ENCODE measurements at regions of chrX and their contacts with region 1.

Region 1: GRCh38 chrX:107654872-107655761 is 26.8 kb downstream of the PRPS1 start:
- DNase-seq: peak; percentile 85
- ATAC-seq: peak; percentile 95
- H3K4me3 Mint-ChIP-seq: peak overlapping the region; percentile 29; the same call in 1 of the 2 replicates
- H3K27ac Mint-ChIP-seq: peak overlapping the region; percentile 57
- H3K4me1 Mint-ChIP-seq: peaks cover 20% of the 10 kb centered on the region
- H3K27me3 Mint-ChIP-seq: no peaks in the 10 kb centered on the region
- CTCF ChIP-seq: peak; percentile 72

Region 2: GRCh38 chrX:107542500-107542899 is 112.6 kb before region 1 on chrX:
- CTCF ChIA-PET with region 1: interaction called, 10 read pairs
- POLR2A ChIA-PET with region 1: no interaction called
- DNase-seq: peak; percentile 14
- ATAC-seq: peak; percentile 92
- H3K4me3 Mint-ChIP-seq: no peak overlapping the region
- H3K27ac Mint-ChIP-seq: no peak overlapping the region
- H3K4me1 Mint-ChIP-seq: peaks cover 13% of the 10 kb centered on the region
- H3K27me3 Mint-ChIP-seq: no peaks in the 10 kb centered on the region
- CTCF ChIP-seq: no peak

Region 3: DNA sequence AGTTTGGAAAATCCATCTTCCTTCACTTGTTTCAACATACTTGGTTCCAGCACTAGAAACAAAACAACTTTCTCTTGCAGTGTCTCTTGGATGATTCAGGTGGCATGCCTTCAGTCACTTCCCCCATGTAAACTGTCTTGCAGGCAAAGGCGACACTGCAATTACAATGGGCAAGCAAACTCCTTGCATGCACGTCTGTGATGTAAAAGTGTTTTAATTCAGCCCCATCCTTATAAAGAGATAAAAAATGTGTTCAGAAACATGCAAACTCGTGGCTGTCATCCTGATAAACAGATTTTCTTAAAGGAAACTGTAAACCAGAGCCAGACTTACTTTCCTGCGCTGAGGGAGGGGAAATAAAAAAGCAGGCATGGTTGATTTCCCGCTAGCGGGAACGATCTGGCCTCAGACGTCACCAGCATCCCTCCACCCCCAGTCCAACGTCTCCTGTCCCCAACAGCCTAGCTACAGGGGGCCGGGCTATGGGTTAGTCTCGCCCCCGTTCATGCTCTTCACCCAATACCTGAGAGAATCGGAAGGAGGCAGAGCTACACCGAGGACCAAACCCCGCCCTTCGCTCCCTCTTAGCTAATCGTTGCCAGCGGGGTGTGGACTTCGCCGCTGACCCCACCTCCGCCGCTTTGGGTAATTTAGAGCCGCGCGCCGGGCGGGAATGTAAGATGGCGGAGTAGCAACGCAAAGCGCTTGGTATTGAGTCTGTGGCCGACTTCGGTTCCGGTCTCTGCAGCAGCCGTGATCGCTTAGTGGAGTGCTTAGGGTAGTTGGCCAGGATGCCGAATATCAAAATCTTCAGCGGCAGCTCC is 27.1 kb before region 1 on chrX and contains the start of gene PRPS1:
- CTCF ChIA-PET with region 1: interaction called, 16 read pairs
- POLR2A ChIA-PET with region 1: interaction called, 9 read pairs
- DNase-seq: peak; percentile 90
- ATAC-seq: peak; percentile 98
- H3K4me3 Mint-ChIP-seq: peak within 1 kb of the TSS; percentile 92
- H3K27ac Mint-ChIP-seq: peak within 1 kb of the TSS; percentile 79
- H3K4me1 Mint-ChIP-seq: peaks cover 24% of the 10 kb centered on the region
- H3K27me3 Mint-ChIP-seq: no peaks in the 10 kb centered on the region; the same call in 1 of the 2 replicates
- CTCF ChIP-seq: no peak
- total RNA-seq, gene PRPS1: 106 to 126 TPM (median 107 TPM) in 3 replicates

Region 4: DNA sequence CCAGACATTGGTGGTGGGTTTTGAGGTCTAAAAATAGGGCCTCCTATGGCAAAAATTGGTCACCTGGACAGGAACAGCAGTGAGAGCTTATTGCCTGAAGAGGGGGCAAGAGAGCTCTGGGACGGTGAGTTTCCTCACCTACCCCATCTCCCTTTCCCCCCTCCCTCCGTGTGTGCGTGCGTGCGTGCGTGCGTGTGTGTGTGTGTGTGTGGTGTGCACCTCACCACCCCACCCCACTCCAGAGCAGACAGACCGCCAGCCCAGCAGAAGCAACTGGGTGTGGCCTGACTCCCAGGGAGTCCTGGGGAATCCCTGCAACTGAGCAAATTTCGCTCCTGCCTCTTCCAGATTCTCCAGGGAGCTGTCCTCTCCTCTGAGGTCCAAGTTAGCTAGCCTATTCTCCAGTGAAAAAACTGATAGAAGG is 17.9 kb after region 1 on chrX:
- CTCF ChIA-PET with region 1: interaction called, 13 read pairs
- POLR2A ChIA-PET with region 1: interaction called, 5 read pairs
- DNase-seq: peak; percentile 54
- ATAC-seq: peak; percentile 65
- H3K4me3 Mint-ChIP-seq: 0 out of 2 replicates have a peak overlapping the region, but pooled peaks have one; percentile 24
- H3K27ac Mint-ChIP-seq: no peak overlapping the region
- H3K4me1 Mint-ChIP-seq: peaks cover 33% of the 10 kb centered on the region
- H3K27me3 Mint-ChIP-seq: 0 out of 2 replicates have a peak, but pooled peaks cover under 1% of the 10 kb centered on the region
- CTCF ChIP-seq: peak; percentile 43; the same call in 1 of the 2 replicates

Region 5: DNA sequence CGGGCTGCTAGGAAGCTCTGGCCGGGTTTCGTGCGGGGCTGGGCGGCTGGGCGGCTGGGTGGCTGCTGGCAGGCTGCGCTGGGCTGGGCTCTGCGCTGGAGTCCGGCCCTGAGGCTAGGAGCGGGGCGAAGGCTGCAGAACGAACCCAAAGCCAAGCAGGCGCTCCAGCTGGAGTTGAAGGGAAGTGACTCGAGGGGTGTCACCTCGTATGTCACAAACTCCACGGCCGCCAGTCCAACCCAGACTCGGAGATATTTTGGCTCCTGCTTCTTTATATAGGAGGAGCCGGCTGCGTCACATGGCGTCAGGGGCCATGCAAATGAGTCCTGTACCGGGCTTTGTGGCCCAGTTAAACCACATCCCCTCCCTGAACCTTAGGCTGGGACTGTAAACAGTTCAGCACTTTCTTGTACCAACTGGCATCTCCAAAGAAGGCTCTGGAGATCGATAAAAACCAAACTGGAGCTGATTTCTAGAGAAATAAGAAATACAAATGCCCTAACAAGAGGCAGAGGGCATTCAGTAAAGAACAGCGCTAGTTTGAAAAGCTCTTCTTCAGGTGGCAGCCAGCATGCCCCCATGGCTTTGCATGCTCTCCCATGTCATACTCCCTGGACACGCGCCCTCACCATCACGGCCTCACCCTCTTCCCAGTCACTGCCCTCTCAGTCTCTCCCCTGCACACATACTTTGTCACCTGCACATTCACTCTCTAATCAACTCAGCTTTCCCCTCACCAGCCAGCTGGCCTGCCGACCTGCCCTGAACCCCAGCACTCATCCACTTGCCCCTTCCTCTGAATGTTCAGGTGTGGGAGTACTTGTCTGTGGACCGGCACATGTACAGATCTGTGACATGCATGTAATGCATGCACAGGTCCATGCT is 61.9 kb after region 1 on chrX:
- CTCF ChIA-PET with region 1: interaction called, 18 read pairs
- POLR2A ChIA-PET with region 1: no interaction called
- DNase-seq: peak; percentile 42
- ATAC-seq: peak; percentile 43
- H3K4me3 Mint-ChIP-seq: peak overlapping the region; percentile 78
- H3K27ac Mint-ChIP-seq: peak overlapping the region; percentile 31
- H3K4me1 Mint-ChIP-seq: peaks cover 37% of the 10 kb centered on the region
- H3K27me3 Mint-ChIP-seq: no peaks in the 10 kb centered on the region
- CTCF ChIP-seq: no peak

Region 6: GRCh38 chrX:107731831-107732502 is 76.8 kb after region 1 on chrX:
- CTCF ChIA-PET with region 1: interaction called, 10 read pairs
- POLR2A ChIA-PET with region 1: no interaction called
- DNase-seq: peak; percentile 52
- ATAC-seq: peak; percentile 78
- H3K4me3 Mint-ChIP-seq: no peak overlapping the region
- H3K27ac Mint-ChIP-seq: peak overlapping the region; percentile 74
- H3K4me1 Mint-ChIP-seq: peaks cover 52% of the 10 kb centered on the region
- H3K27me3 Mint-ChIP-seq: no peaks in the 10 kb centered on the region
- CTCF ChIP-seq: no peak

Measured in WTC11 (cell line).